ENCODE measurements at regions of chr16 and their contacts with region 1.

Region 1: DNA sequence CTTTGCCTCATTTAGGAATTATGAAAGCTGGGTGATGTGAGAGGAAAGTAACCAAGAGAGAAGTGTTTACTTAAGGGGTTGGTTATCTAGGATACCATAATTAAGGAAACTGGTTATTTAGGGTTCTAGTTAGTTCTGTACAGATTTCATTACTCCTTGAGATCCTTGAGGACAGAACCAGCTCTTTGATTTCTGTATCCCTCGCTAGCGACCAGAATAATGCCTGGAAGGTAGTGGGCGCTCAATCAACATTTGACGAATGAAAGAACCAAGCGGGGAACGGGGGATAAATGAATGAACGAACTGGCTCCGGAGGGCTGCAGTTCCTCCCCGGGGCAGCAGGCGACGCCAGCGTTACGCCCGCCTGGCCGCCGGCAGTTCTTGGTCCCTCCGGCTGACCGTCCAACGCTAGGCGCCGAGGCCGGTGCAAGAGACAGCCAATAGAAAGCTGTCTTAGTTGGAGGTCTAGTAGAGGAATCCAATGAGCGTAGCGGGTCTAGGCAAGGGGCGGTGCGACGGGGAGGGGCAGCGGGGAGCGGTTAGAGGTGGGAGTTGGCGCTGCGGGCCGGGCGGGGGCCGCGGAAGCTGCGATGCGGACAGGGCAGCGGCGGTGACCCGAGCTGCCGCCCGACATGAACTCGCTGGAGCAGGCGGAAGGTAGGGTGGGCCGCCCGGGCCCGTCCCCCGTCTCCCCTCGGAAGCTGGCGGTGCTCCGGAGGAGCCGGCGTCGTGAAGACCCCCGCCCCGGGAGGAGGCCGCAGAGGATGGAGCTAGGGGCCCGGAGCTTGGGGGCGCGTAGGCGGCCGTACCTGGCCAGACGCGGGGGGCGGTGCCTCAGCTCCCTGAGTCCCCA is at the start of gene CNEP1R1:
- DNase-seq: peak; percentile 86 to 97 (median 91)
- ATAC-seq: peak; percentile 93
- H3K4me3 ChIP-seq: peak within 1 kb of the TSS; percentile 74 to 79
- H3K4me3 Mint-ChIP-seq: peak within 1 kb of the TSS; percentile 97
- H3K27ac ChIP-seq: peak within 1 kb of the TSS; percentile 49 to 65
- H3K27ac Mint-ChIP-seq: peak within 1 kb of the TSS; percentile 94
- H3K4me1 ChIP-seq: peaks cover 17% of the 10 kb centered on the region
- H3K4me1 Mint-ChIP-seq: peaks cover 27% of the 10 kb centered on the region
- H3K27me3 ChIP-seq: no peaks in the 10 kb centered on the region
- H3K27me3 Mint-ChIP-seq: no peaks in the 10 kb centered on the region
- CTCF ChIP-seq: peak; percentile 99
- total RNA-seq, gene CNEP1R1: 37.6 to 41.0 TPM

Region 2: GRCh38 chr16:49748322-49748721 is 276.6 kb before region 1 on chr16:
- CTCF ChIA-PET with region 1: no interaction called
- POLR2A ChIA-PET with region 1: no interaction called
- intact Hi-C with region 1: no loop called
- DNase-seq: no peak
- ATAC-seq: no peak
- H3K4me3 ChIP-seq: no peak overlapping the region
- H3K4me3 Mint-ChIP-seq: no peak overlapping the region
- H3K27ac ChIP-seq: no peak overlapping the region
- H3K27ac Mint-ChIP-seq: no peak overlapping the region
- H3K4me1 ChIP-seq: no peaks in the 10 kb centered on the region
- H3K4me1 Mint-ChIP-seq: no peaks in the 10 kb centered on the region
- H3K27me3 ChIP-seq: no peaks in the 10 kb centered on the region
- H3K27me3 Mint-ChIP-seq: peaks cover 14% of the 10 kb centered on the region
- CTCF ChIP-seq: no peak

Region 3: GRCh38 chr16:50002190-50002589 is 22.7 kb before region 1 on chr16:
- CTCF ChIA-PET with region 1: no interaction called
- POLR2A ChIA-PET with region 1: no interaction called
- intact Hi-C with region 1: no loop called
- DNase-seq: no peak
- ATAC-seq: no peak
- H3K4me3 ChIP-seq: no peak overlapping the region
- H3K4me3 Mint-ChIP-seq: no peak overlapping the region
- H3K27ac ChIP-seq: no peak overlapping the region
- H3K27ac Mint-ChIP-seq: no peak overlapping the region
- H3K4me1 ChIP-seq: no peaks in the 10 kb centered on the region
- H3K4me1 Mint-ChIP-seq: no peaks in the 10 kb centered on the region
- H3K27me3 ChIP-seq: no peaks in the 10 kb centered on the region
- H3K27me3 Mint-ChIP-seq: peaks cover 23% of the 10 kb centered on the region
- CTCF ChIP-seq: no peak

Region 4: DNA sequence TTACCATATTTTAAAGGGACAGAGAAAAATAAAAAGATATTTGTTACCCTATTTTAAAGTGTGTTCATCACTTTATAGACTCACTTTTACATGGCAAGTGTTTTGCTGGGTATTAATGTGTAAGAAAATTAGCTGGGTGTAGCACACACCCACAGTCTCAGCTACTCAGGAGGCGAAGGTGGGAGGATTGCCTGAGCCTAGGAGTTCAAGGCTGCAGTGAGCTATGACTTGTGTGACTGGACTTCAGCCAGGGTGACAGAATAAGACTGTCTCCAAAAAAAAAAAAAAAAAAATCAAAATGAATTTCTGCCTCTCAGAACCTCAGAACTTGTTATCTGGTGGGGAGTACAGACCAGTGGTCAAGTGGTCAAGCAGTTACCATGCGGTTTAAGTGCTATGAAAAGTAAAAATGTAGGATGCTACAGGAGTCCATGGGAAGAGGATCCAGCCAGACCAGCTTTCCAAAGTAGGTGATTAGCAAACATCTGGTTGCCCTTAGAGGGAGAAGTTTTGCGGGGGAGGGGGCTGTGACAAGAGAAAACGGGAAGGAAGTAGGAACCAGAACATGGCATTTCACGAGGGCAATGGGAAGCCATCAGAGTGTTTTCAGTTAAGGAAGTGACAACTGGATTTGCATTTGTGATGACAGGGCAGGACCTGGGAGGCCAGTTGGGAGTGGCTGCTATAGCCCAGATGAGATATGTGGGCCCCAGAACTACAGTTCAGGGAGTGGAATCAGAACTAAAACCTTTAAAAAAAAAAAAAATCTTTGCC is 14.0 kb after region 1 on chr16:
- CTCF ChIA-PET with region 1: interaction called, 13 read pairs
- POLR2A ChIA-PET with region 1: interaction called, 6 read pairs
- intact Hi-C with region 1: no loop called
- DNase-seq: peak in 1 of 9 experiments; percentile 17
- ATAC-seq: no peak
- H3K4me3 ChIP-seq: no peak overlapping the region
- H3K4me3 Mint-ChIP-seq: no peak overlapping the region
- H3K27ac ChIP-seq: no peak overlapping the region
- H3K27ac Mint-ChIP-seq: no peak overlapping the region
- H3K4me1 ChIP-seq: no peaks in the 10 kb centered on the region
- H3K4me1 Mint-ChIP-seq: peaks cover 6% of the 10 kb centered on the region
- H3K27me3 ChIP-seq: no peaks in the 10 kb centered on the region
- H3K27me3 Mint-ChIP-seq: peaks cover under 1% of the 10 kb centered on the region
- CTCF ChIP-seq: no peak

Region 5: GRCh38 chr16:50065624-50066481 is 40.9 kb after region 1 on chr16 and contains the start of gene HEATR3:
- CTCF ChIA-PET with region 1: interaction called, 18 read pairs
- POLR2A ChIA-PET with region 1: interaction called, 22 read pairs
- intact Hi-C with region 1: loop called (anchors 1 to 2 kb)
- DNase-seq: peak; percentile 88 to 97 (median 93)
- ATAC-seq: peak; percentile 86
- H3K4me3 ChIP-seq: peak within 1 kb of the TSS; percentile 78 to 92
- H3K4me3 Mint-ChIP-seq: peak within 1 kb of the TSS; percentile 93
- H3K27ac ChIP-seq: peak within 1 kb of the TSS; percentile 73 to 79
- H3K27ac Mint-ChIP-seq: peak within 1 kb of the TSS; percentile 92
- H3K4me1 ChIP-seq: peaks cover 17% of the 10 kb centered on the region
- H3K4me1 Mint-ChIP-seq: peaks cover 42% of the 10 kb centered on the region
- H3K27me3 ChIP-seq: no peaks in the 10 kb centered on the region
- H3K27me3 Mint-ChIP-seq: no peaks in the 10 kb centered on the region
- CTCF ChIP-seq: no peak
- total RNA-seq, gene HEATR3: 9.3 to 11.4 TPM

Region 6: DNA sequence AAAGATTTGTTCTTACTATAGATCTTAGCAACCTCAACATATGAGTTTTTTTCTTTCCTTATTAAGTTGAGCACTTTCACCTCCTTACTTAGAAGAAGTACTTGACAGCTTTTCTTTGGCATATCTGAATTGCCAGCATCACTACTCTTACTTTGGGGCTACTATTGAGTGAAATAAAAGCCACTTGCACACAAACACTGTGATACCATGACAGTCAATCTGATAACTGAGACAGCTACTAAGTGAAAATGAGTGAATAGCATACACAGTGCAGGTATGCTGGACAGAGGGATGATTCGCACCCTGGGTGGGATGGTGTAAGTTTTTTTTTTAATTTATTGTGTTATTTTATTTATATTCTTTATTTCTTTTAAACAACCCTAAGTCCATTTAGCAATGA is 114.7 kb after region 1 on chr16:
- CTCF ChIA-PET with region 1: no interaction called
- POLR2A ChIA-PET with region 1: no interaction called
- intact Hi-C with region 1: no loop called
- DNase-seq: no peak
- ATAC-seq: no peak
- H3K4me3 ChIP-seq: no peak overlapping the region
- H3K4me3 Mint-ChIP-seq: no peak overlapping the region
- H3K27ac ChIP-seq: no peak overlapping the region
- H3K27ac Mint-ChIP-seq: no peak overlapping the region
- H3K4me1 ChIP-seq: no peaks in the 10 kb centered on the region
- H3K4me1 Mint-ChIP-seq: no peaks in the 10 kb centered on the region
- H3K27me3 ChIP-seq: no peaks in the 10 kb centered on the region
- H3K27me3 Mint-ChIP-seq: no peaks in the 10 kb centered on the region
- CTCF ChIP-seq: no peak

Region 7: GRCh38 chr16:50210266-50211038 is 185.5 kb after region 1 on chr16:
- CTCF ChIA-PET with region 1: interaction called, 68 read pairs
- POLR2A ChIA-PET with region 1: interaction called, 12 read pairs
- intact Hi-C with region 1: loop called (anchors 1 kb)
- DNase-seq: peak; percentile 34 to 76 (median 60)
- ATAC-seq: peak; percentile 90
- H3K4me3 ChIP-seq: no peak overlapping the region
- H3K4me3 Mint-ChIP-seq: no peak overlapping the region
- H3K27ac ChIP-seq: no peak overlapping the region
- H3K27ac Mint-ChIP-seq: peak overlapping the region; percentile 72
- H3K4me1 ChIP-seq: peaks cover 3% of the 10 kb centered on the region
- H3K4me1 Mint-ChIP-seq: peaks cover 39% of the 10 kb centered on the region
- H3K27me3 ChIP-seq: no peaks in the 10 kb centered on the region
- H3K27me3 Mint-ChIP-seq: no peaks in the 10 kb centered on the region
- CTCF ChIP-seq: peak; percentile 61

Region 8: DNA sequence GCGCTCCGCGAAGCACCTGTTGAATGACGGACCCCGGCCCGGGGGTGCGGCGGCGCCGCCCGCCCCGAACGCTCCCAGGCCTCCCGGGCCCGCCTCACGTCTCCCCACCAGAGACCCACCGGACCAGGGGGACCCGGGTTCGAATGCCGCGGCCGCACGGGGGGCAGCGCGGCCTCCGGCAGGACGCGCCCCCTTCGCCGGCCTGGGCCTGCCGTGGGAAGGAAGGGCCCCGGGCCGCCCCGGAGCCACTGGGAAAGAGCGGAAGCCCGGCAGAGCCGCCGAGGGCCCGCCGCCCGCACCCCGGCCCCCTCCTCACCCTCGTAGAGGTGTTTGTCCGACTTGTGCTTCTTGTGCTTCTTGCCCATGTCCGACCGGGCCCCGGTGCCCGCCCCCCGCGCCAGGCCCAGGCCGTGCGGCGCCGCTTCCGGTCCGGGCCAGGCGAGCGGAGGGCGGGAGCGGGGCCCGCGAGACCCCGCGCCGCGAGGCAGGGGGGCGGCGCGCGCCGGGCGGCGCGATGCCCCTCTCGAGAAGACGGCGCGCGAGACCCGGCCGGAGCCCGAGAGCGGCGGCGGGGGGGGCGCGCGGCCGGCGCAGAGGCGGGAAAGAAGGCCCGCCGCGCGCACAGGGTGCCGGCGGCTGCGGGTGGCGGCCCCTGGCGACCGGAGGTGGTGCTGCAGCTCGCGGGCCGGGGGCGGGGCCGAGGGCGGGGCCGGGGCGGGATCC is 343.7 kb after region 1 on chr16 and contains the start of gene BRD7:
- CTCF ChIA-PET with region 1: interaction called, 4 read pairs
- POLR2A ChIA-PET with region 1: no interaction called
- intact Hi-C with region 1: loop called in 1 of 2 experiments (anchors 2 kb)
- DNase-seq: peak; percentile 60 to 88 (median 71)
- ATAC-seq: peak; percentile 94
- H3K4me3 ChIP-seq: peak within 1 kb of the TSS; percentile 54 to 60
- H3K4me3 Mint-ChIP-seq: peak within 1 kb of the TSS; percentile 85
- H3K27ac ChIP-seq: peak within 1 kb of the TSS; percentile 56 to 79
- H3K27ac Mint-ChIP-seq: peak within 1 kb of the TSS; percentile 95
- H3K4me1 ChIP-seq: peaks cover 41% of the 10 kb centered on the region
- H3K4me1 Mint-ChIP-seq: peaks cover 52% of the 10 kb centered on the region
- H3K27me3 ChIP-seq: no peaks in the 10 kb centered on the region
- H3K27me3 Mint-ChIP-seq: no peaks in the 10 kb centered on the region
- CTCF ChIP-seq: no peak
- total RNA-seq, gene BRD7: 113 to 117 TPM

Measured in CD8-positive, alpha-beta T cell (primary cell).